Colonic mucosa (tissue), 4 donors: ENCODE measurements at regions of chr1 and their contacts with region 1.

Region 1: GRCh38 chr1:17502326-17502778 is 37.1 kb upstream of the ARHGEF10L start:
- DNase-seq: peak; percentile 94
- H3K4me3 ChIP-seq: no peak overlapping the region
- H3K27ac ChIP-seq: no peak overlapping the region
- H3K4me1 ChIP-seq: no peaks in the 10 kb centered on the region
- H3K27me3 ChIP-seq: no peaks in the 10 kb centered on the region
- CTCF ChIP-seq: peak; percentile 88

Region 2: GRCh38 chr1:17606826-17607440 is 104.6 kb after region 1 on chr1:
- intact Hi-C with region 1: loop called (anchors 2 kb)
- DNase-seq: peak; percentile 81
- H3K4me3 ChIP-seq: no peak overlapping the region
- H3K27ac ChIP-seq: no peak overlapping the region
- H3K4me1 ChIP-seq: peaks cover 3% of the 10 kb centered on the region
- H3K27me3 ChIP-seq: no peaks in the 10 kb centered on the region
- CTCF ChIP-seq: peak; percentile 95

Region 3: DNA sequence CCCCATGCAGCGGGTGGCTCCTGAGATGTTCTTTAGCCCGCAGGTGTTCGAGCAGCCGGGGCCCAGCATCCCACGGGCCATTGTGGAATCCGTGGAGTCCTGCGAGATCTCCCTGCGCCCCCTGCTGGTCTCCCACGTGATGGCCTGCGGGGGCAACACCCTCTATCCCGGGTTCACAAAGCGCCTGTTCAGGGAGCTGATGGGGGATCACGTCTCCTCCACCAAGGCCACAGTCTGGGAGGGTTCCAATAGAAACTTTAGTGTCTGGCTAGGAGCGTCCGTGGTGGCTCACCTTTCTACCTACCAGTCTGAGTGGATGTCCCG is 323.8 kb after region 1 on chr1:
- intact Hi-C with region 1: loop called (anchors 5 kb)
- DNase-seq: peak; percentile 66
- H3K4me3 ChIP-seq: no peak overlapping the region
- H3K27ac ChIP-seq: no peak overlapping the region
- H3K4me1 ChIP-seq: no peaks in the 10 kb centered on the region
- H3K27me3 ChIP-seq: no peaks in the 10 kb centered on the region
- CTCF ChIP-seq: peak; percentile 71